ENCODE measurements at regions of chr5 and their contacts with region 1.

Region 1: GRCh38 chr5:442335-443238 is at the start of gene EXOC3:
- DNase-seq: no peak
- ATAC-seq: peak; percentile 91
- H3K4me3 ChIP-seq: peak within 1 kb of the TSS; percentile 81
- H3K27ac ChIP-seq: peak within 1 kb of the TSS; percentile 81
- H3K4me1 ChIP-seq: peaks cover 23% of the 10 kb centered on the region
- H3K27me3 ChIP-seq: no peaks in the 10 kb centered on the region
- CTCF ChIP-seq: no peak
- EP300 ChIP-seq: no peak
- POLR2A ChIP-seq: peak; percentile 91
- RAD21 ChIP-seq: no peak
- polyA plus RNA-seq, gene EXOC3: 1.6 to 7.2 TPM

Region 2: DNA sequence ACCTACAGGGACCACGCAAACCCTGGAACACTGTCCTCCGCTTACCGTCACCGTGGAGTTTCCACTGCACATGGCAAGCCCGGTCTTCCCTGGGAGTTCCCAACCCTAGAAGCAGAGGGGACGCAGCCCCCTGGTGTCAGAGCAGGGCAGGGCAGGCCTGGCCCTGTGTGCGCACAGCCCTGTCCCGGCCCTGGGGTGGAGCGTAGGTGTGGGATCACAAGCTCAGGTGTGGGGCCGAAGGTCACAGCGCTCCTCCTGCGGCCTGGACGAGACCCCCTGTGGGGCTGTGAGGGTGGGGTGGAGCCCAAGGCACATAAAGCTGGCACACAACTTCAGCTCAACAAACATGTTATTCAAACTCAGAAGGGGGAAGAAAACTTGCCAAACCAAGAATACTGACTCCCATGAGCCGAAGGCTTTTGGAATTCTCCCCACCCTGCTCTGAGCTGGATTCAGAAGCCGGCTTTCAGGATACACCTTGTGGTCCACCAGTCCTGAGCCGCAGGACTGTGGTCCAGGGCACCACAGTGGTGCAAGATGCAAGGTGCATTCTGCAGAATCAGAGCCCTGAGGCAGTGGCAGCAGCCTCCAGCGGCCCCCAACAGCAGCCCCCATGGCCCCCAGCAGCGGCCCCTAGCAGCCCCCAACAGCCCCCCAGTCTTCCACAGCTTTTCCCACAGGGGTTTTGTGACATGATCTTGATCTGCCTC is 11.4 kb before region 1 on chr5:
- CTCF ChIA-PET with region 1: interaction called, 10 read pairs
- POLR2A ChIA-PET with region 1: no interaction called
- RAD21 ChIA-PET with region 1: interaction called, 3 read pairs
- SMC1A ChIA-PET with region 1: interaction called, 4 read pairs
- in situ Hi-C with region 1: no loop called
- intact Hi-C with region 1: no loop called
- DNase-seq: no peak
- ATAC-seq: peak; percentile 96
- H3K4me3 ChIP-seq: no peak overlapping the region
- H3K27ac ChIP-seq: no peak overlapping the region
- H3K4me1 ChIP-seq: peaks cover 8% of the 10 kb centered on the region
- H3K27me3 ChIP-seq: no peaks in the 10 kb centered on the region
- CTCF ChIP-seq: peak; percentile 75 to 89 (median 89)
- EP300 ChIP-seq: no peak
- POLR2A ChIP-seq: peak; percentile 57; the same call in 1 of the 2 replicates
- RAD21 ChIP-seq: peak; percentile 88

Region 3: DNA sequence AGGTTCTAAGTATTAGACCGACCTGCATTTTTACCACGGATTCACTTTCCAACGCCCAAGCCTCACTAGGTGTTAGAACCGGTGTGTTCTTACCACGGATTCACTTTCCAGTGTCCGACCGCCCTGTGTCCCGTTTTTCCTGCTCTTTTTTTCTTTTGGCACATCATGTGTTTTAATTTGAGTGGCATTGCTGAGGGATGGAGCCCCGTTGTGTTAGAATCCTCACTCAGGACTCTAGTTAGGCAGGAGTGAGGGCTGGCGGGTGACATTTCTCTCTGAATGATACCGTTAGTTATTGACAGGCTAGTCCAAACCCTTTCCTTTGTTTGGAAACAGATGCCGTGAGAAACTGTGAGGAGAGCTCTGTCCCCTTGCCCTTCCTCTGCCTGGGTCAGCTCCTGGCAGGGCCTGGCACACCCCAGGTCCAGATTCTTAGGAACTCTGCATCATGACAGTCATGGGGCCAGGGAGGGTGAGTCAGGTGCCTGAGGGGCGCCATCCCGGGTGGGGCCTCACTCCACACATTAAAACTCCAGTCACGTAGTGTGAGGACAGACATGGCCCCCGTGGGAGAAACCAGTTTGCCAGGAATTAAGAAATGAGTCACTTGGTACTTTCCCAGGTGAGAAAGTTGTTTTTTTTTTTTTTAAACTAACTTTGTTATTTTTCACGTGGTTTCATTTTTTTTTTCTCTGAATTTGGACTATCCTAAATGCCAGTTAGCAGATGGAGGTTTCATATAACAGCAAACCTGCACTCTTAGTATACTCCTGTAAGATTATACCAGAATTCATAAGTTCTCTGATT is 16.2 kb after region 1 on chr5:
- CTCF ChIA-PET with region 1: interaction called, 13 read pairs
- POLR2A ChIA-PET with region 1: interaction called, 4 read pairs
- RAD21 ChIA-PET with region 1: interaction called, 8 read pairs
- SMC1A ChIA-PET with region 1: interaction called, 5 read pairs
- in situ Hi-C with region 1: no loop called
- intact Hi-C with region 1: no loop called
- DNase-seq: peak; percentile 56
- ATAC-seq: peak; percentile 92
- H3K4me3 ChIP-seq: no peak overlapping the region
- H3K27ac ChIP-seq: peak overlapping the region; percentile 91
- H3K4me1 ChIP-seq: peaks cover 7% of the 10 kb centered on the region
- H3K27me3 ChIP-seq: no peaks in the 10 kb centered on the region
- CTCF ChIP-seq: no peak
- EP300 ChIP-seq: peak in 1 of 2 experiments; percentile 45; a peak in 1 of 4 replicates
- POLR2A ChIP-seq: no peak
- RAD21 ChIP-seq: no peak

Region 4: DNA sequence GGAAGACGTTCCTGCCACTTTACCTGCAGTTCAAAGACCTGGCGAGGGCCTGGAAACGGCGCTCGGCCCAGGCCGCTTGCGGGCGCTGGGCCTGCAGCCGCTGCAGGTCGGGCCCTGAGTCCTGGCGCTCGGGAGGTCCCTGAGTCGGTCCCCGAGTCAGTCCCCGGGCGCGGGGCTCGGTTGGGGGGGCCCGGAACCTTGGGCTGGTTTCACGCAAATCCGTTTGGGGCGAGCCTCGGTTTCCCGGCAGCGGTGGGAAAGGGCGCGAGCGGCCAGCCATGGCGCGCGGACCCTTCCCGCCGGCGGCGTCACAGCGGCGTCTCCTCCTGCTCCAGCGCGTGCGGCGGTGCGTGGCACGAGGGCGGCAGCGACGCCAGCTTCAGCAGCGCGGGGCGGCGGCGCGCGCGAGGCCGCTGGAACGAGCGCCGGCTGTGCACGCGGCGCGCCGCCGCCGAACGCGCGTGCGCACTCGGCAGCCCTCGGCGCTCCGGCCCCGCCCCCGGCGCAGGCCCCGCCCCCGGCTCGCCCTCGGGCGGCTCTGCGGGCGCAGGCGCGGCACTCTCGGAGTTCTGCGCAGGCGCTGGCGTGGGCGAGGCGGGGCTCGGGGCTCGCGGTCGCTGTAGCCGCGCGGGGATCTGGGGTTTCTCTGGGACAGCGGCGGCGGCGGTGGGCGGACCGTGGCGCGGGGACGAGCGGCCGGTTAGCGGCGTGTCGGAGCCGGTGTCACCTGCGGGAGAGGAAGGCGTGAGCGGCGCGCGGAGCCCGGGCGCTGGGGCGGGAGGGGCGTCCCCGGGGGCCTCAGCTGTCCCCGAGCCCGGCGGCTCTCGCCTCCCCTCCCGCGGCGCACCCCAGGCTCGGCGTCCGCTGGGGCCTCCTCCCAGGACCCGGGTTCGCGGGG is 30.3 kb after region 1 on chr5:
- CTCF ChIA-PET with region 1: interaction called, 46 read pairs
- POLR2A ChIA-PET with region 1: interaction called, 9 read pairs
- RAD21 ChIA-PET with region 1: interaction called, 18 read pairs
- SMC1A ChIA-PET with region 1: interaction called, 9 read pairs
- in situ Hi-C with region 1: no loop called
- intact Hi-C with region 1: no loop called
- DNase-seq: no peak
- ATAC-seq: peak; percentile 80
- H3K4me3 ChIP-seq: peak overlapping the region; percentile 97
- H3K27ac ChIP-seq: peak overlapping the region; percentile 72
- H3K4me1 ChIP-seq: peaks cover 4% of the 10 kb centered on the region
- H3K27me3 ChIP-seq: no peaks in the 10 kb centered on the region
- CTCF ChIP-seq: no peak
- EP300 ChIP-seq: no peak
- POLR2A ChIP-seq: peak; percentile 93
- RAD21 ChIP-seq: no peak

Region 5: GRCh38 chr5:902129-902916 is 459.7 kb after region 1 on chr5:
- CTCF ChIA-PET with region 1: interaction called, 24 read pairs
- POLR2A ChIA-PET with region 1: no interaction called
- RAD21 ChIA-PET with region 1: interaction called, 3 read pairs
- SMC1A ChIA-PET with region 1: interaction called, 4 read pairs
- in situ Hi-C with region 1: no loop called
- intact Hi-C with region 1: no loop called
- DNase-seq: no peak
- ATAC-seq: no peak
- H3K4me3 ChIP-seq: no peak overlapping the region
- H3K27ac ChIP-seq: no peak overlapping the region
- H3K4me1 ChIP-seq: no peaks in the 10 kb centered on the region
- H3K27me3 ChIP-seq: no peaks in the 10 kb centered on the region
- CTCF ChIP-seq: no peak
- EP300 ChIP-seq: no peak
- POLR2A ChIP-seq: no peak
- RAD21 ChIP-seq: no peak

Measured in GM12878 (cell line).